T-cell (primary cell): ENCODE measurements at regions of chrX and their contacts with region 1.

Region 1: DNA sequence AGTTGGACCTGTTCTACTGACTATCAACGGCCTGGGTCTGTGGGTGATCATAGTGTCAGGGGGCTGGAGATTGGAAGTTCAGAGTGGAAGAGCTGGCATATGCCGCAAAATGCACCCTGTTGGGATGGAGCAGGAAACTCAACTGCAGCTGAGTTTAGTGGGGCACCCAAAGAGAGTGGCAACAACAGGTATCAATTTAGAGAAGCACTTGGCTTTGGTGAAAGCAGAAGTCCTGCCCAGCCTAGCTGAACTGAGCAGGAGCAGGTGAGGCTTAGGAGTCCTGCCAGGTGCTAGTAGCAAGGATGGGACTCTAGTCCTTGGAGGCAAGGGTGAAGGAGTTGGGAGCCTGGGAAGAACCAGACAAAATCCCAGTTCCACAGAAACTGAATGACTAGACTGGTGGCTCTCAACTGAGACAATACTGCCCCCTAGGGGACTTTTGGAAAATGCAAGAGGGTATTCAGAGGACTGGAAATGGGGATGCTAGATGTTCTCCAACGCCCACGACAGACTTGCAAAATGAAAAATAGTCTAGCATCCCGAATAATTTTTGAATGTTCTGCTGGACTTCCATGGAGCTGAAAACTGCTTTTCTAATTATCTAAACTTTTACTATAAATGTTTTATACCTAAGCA is 49.4 kb downstream of the RTL9 start:
- DNase-seq: peak in 24 of 35 experiments; percentile 2 to 72 (median 22)
- ATAC-seq: peak in 2 of 4 experiments; percentile 47
- H3K4me3 ChIP-seq: no peak overlapping the region
- H3K4me3 Mint-ChIP-seq: no peak overlapping the region
- H3K27ac ChIP-seq: no peak overlapping the region
- H3K27ac Mint-ChIP-seq: no peak overlapping the region
- H3K4me1 ChIP-seq: peaks cover 0 to 1% of the 10 kb centered on the region in 2 experiments
- H3K4me1 Mint-ChIP-seq: peaks cover under 1 to 2% (median under 1%) of the 10 kb centered on the region in 3 donors
- H3K27me3 ChIP-seq: no peaks in the 10 kb centered on the region
- H3K27me3 Mint-ChIP-seq: peaks cover under 1 to 41% of the 10 kb centered on the region in 2 donors

Region 2: GRCh38 chrX:109623997-109624396 is 784.0 kb before region 1 on chrX:
- CTCF ChIA-PET with region 1: no interaction called
- POLR2A ChIA-PET with region 1: no interaction called
- DNase-seq: no peak
- ATAC-seq: no peak
- H3K4me3 ChIP-seq: no peak overlapping the region
- H3K4me3 Mint-ChIP-seq: no peak overlapping the region
- H3K27ac ChIP-seq: no peak overlapping the region
- H3K27ac Mint-ChIP-seq: no peak overlapping the region
- H3K4me1 ChIP-seq: no peaks in the 10 kb centered on the region
- H3K4me1 Mint-ChIP-seq: no peaks in the 10 kb centered on the region
- H3K27me3 ChIP-seq: no peaks in the 10 kb centered on the region
- H3K27me3 Mint-ChIP-seq: peaks cover 0 to 9% of the 10 kb centered on the region in 2 donors

Region 3: DNA sequence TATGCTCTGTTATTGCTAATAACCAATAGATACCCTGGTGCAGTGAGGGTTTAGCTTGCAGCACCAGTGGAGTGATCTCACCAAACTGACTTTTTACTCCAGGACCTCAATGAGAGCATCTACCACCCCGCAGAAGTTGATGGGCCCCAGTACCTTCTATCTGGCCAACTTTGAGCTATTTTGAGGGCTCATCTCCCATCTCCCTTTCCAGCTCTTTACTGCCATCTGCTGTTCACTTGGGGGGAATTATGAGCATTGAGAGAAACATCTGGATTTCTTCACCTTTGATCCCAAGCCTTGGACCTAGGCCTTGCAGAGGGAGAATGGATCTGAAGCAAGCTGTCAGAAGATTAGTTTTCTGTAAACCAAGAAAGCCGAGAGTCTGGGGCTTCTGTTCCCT is 261.5 kb before region 1 on chrX:
- CTCF ChIA-PET with region 1: interaction called, 29 to 64 read pairs
- POLR2A ChIA-PET with region 1: no interaction called
- DNase-seq: peak in 14 of 35 experiments; percentile 0 to 58 (median 10)
- ATAC-seq: peak in 3 of 4 experiments; percentile 41 to 60 (median 58)
- H3K4me3 ChIP-seq: no peak overlapping the region
- H3K4me3 Mint-ChIP-seq: no peak overlapping the region
- H3K27ac ChIP-seq: no peak overlapping the region
- H3K27ac Mint-ChIP-seq: no peak overlapping the region
- H3K4me1 ChIP-seq: peaks cover 0 to 4% of the 10 kb centered on the region in 2 experiments
- H3K4me1 Mint-ChIP-seq: peaks cover 0 to 11% (median 3%) of the 10 kb centered on the region in 3 donors
- H3K27me3 ChIP-seq: no peaks in the 10 kb centered on the region
- H3K27me3 Mint-ChIP-seq: peaks cover 0 to 7% of the 10 kb centered on the region in 2 donors

Region 4: GRCh38 chrX:110156167-110156754 is 251.8 kb before region 1 on chrX:
- CTCF ChIA-PET with region 1: interaction called, 34 to 38 read pairs
- POLR2A ChIA-PET with region 1: no interaction called
- DNase-seq: peak in 1 of 35 experiments; percentile 36
- ATAC-seq: no peak
- H3K4me3 ChIP-seq: no peak overlapping the region
- H3K4me3 Mint-ChIP-seq: no peak overlapping the region
- H3K27ac ChIP-seq: no peak overlapping the region
- H3K27ac Mint-ChIP-seq: no peak overlapping the region
- H3K4me1 ChIP-seq: peaks cover 0 to 3% of the 10 kb centered on the region in 2 experiments
- H3K4me1 Mint-ChIP-seq: peaks cover 7 to 14% (median 7%) of the 10 kb centered on the region in 3 donors
- H3K27me3 ChIP-seq: no peaks in the 10 kb centered on the region
- H3K27me3 Mint-ChIP-seq: peaks cover 0 to 19% of the 10 kb centered on the region in 2 donors